K562 (cell line): ENCODE measurements at regions of chr2 and their contacts with region 1.

Region 1: GRCh38 chr2:117470311-117471095 is 344.0 kb upstream of the DDX18 start:
- DNase-seq: peak; percentile 22 to 48 (median 29)
- ATAC-seq: peak; percentile 72
- H3K4me3 ChIP-seq: no peak overlapping the region
- H3K27ac ChIP-seq: no peak overlapping the region
- H3K4me1 ChIP-seq: no peaks in the 10 kb centered on the region
- H3K27me3 ChIP-seq: no peaks in the 10 kb centered on the region
- CTCF ChIP-seq: peak; percentile 47 to 59 (median 52)
- EP300 ChIP-seq: no peak
- POLR2A ChIP-seq: no peak
- RAD21 ChIP-seq: peak in 1 of 2 experiments; percentile 58; a peak in 2 of 4 replicates

Region 2: GRCh38 chr2:117396161-117396560 is 74.3 kb before region 1 on chr2:
- CTCF ChIA-PET with region 1: no interaction called
- POLR2A ChIA-PET with region 1: no interaction called
- in situ Hi-C with region 1: no loop called
- intact Hi-C with region 1: no loop called
- DNase-seq: no peak
- ATAC-seq: no peak
- H3K4me3 ChIP-seq: no peak overlapping the region
- H3K27ac ChIP-seq: no peak overlapping the region
- H3K4me1 ChIP-seq: no peaks in the 10 kb centered on the region
- H3K27me3 ChIP-seq: no peaks in the 10 kb centered on the region
- CTCF ChIP-seq: no peak
- EP300 ChIP-seq: no peak
- POLR2A ChIP-seq: no peak
- RAD21 ChIP-seq: no peak

Region 3: GRCh38 chr2:117785740-117786139 is 315.2 kb after region 1 on chr2:
- CTCF ChIA-PET with region 1: no interaction called
- POLR2A ChIA-PET with region 1: interaction called, 3 read pairs
- in situ Hi-C with region 1: no loop called
- intact Hi-C with region 1: loop called (anchors 5 kb)
- DNase-seq: peak; percentile 42 to 67 (median 44)
- ATAC-seq: peak; percentile 84
- H3K4me3 ChIP-seq: no peak overlapping the region
- H3K27ac ChIP-seq: no peak overlapping the region
- H3K4me1 ChIP-seq: no peaks in the 10 kb centered on the region
- H3K27me3 ChIP-seq: no peaks in the 10 kb centered on the region
- CTCF ChIP-seq: peak; percentile 44 to 65 (median 59); a peak in 5 of 6 replicates
- EP300 ChIP-seq: no peak
- POLR2A ChIP-seq: no peak
- RAD21 ChIP-seq: peak; percentile 35 to 70; a peak in 3 of 4 replicates

Region 4: GRCh38 chr2:118348380-118349034 is 878.0 kb after region 1 on chr2:
- CTCF ChIA-PET with region 1: no interaction called
- POLR2A ChIA-PET with region 1: no interaction called
- in situ Hi-C with region 1: no loop called
- intact Hi-C with region 1: no loop called
- DNase-seq: no peak
- ATAC-seq: no peak
- H3K4me3 ChIP-seq: no peak overlapping the region
- H3K27ac ChIP-seq: no peak overlapping the region
- H3K4me1 ChIP-seq: no peaks in the 10 kb centered on the region
- H3K27me3 ChIP-seq: no peaks in the 10 kb centered on the region
- CTCF ChIP-seq: no peak
- EP300 ChIP-seq: no peak
- POLR2A ChIP-seq: no peak
- RAD21 ChIP-seq: no peak